Calu3 (cell line): ENCODE measurements at regions of chr6 and their contacts with region 1.

Region 1: DNA sequence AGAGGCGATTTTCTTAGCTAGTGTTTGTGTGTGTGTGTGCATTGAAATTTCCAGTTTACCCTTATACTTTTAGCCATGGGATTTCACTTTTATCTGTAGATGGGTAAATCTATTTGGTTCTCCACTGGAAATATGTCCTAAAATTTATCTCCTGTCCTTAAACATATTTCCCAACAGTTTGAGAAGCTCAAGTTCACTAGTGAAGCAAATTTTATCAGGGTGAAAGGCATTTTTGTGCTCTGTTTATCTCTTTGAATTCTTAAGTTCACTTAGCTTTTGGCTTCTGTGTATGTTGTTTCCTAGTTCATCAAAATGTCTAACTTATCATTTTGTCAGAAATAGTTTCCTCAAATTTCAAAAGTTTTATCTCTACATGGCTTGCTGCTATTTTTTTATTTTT is 561.6 kb downstream of the PHF3 start:
- DNase-seq: no peak
- H3K4me3 Mint-ChIP-seq: no peak overlapping the region
- H3K27ac Mint-ChIP-seq: no peak overlapping the region
- H3K4me1 Mint-ChIP-seq: no peaks in the 10 kb centered on the region
- H3K27me3 Mint-ChIP-seq: no peaks in the 10 kb centered on the region
- CTCF ChIP-seq: no peak

Region 2: DNA sequence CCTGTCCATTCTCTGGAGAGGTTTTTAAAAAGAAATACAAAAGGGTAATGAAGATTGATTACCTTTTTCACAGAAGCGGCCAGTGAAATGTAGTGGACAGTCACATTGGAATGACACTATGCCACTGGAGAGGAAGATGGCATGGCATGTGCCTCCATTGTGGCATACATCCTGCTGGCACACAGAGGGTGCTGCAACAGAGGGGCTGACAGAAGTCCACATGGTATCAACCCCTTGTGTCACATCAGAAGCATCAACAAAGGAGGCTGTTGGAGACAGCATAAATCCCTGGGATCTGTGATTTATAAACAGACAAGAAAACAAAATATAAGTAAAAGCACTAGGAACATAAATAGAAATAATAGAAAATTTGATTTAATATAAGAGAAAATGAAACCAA is 33.3 kb after region 1 on chr6:
- CTCF ChIA-PET with region 1: no interaction called
- intact Hi-C with region 1: loop called (anchors 2 kb)
- DNase-seq: no peak
- H3K4me3 Mint-ChIP-seq: no peak overlapping the region
- H3K27ac Mint-ChIP-seq: no peak overlapping the region
- H3K4me1 Mint-ChIP-seq: no peaks in the 10 kb centered on the region
- H3K27me3 Mint-ChIP-seq: no peaks in the 10 kb centered on the region
- CTCF ChIP-seq: no peak